ENCODE measurements at regions of chr10 and their contacts with region 1.

Region 1: GRCh38 chr10:28334296-28334695 is 31.4 kb upstream of the MPP7 start:
- DNase-seq: peak in 29 of 35 experiments; percentile 3 to 95 (median 52)
- ATAC-seq: peak; percentile 69 to 78 (median 74)
- H3K4me3 ChIP-seq: peak overlapping the region; percentile 55 to 62
- H3K4me3 Mint-ChIP-seq: peak overlapping the region; percentile 91 to 92 (median 92)
- H3K27ac ChIP-seq: peak overlapping the region; percentile 97
- H3K27ac Mint-ChIP-seq: peak overlapping the region; percentile 99 to 100
- H3K4me1 ChIP-seq: peaks cover 33 to 61% of the 10 kb centered on the region in 2 experiments
- H3K4me1 Mint-ChIP-seq: peaks cover 64 to 84% (median 67%) of the 10 kb centered on the region in 3 donors
- H3K27me3 ChIP-seq: no peaks in the 10 kb centered on the region
- H3K27me3 Mint-ChIP-seq: no peaks in the 10 kb centered on the region

Region 2: DNA sequence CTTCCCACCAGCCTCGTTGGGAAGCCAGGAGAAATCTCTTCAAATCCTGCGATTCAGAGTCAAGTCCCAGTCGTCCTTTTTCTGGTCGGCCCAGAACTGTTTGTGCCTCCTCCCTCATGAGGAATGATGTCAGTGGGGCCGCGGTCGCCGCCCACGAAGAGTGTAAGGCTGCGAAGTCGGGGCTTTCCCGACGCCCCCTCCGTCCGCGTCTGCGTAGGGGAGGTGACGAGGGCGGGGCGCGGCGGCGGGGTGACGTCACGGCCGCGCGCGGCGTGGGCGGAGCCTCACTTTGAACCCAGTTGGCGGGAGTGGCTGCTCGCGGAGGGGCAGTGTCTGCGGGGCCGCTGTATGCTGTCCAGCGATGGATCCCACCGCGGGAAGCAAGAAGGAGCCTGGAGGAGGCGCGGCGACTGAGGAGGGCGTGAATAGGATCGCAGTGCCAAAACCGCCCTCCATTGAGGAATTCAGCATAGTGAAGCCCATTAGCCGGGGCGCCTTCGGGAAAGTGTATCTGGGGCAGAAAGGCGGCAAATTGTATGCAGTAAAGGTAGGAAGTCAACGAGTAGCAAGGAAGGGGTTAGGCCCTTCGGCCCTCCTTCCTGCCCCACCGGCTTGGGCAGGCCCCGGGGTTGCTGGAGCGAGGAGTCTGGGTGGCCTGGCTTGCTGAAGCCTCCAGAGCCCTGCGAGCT is 1179.1 kb before region 1 on chr10 and contains the start of gene MASTL:
- CTCF ChIA-PET with region 1: no interaction called
- POLR2A ChIA-PET with region 1: interaction called in 1 of 2 experiments, 15 read pairs
- DNase-seq: peak; percentile 87 to 98 (median 94)
- ATAC-seq: peak; percentile 82 to 90 (median 84)
- H3K4me3 ChIP-seq: peak within 1 kb of the TSS; percentile 65 to 100
- H3K4me3 Mint-ChIP-seq: peak within 1 kb of the TSS; percentile 96 to 100 (median 99)
- H3K27ac ChIP-seq: peak within 1 kb of the TSS; percentile 95
- H3K27ac Mint-ChIP-seq: peak within 1 kb of the TSS; percentile 100
- H3K4me1 ChIP-seq: peaks cover 12 to 39% of the 10 kb centered on the region in 2 experiments
- H3K4me1 Mint-ChIP-seq: peaks cover 49 to 65% (median 52%) of the 10 kb centered on the region in 3 donors
- H3K27me3 ChIP-seq: no peaks in the 10 kb centered on the region
- H3K27me3 Mint-ChIP-seq: no peaks in the 10 kb centered on the region
- total RNA-seq, gene MASTL: 4.2 to 21.2 (median 10.4) TPM

Region 3: DNA sequence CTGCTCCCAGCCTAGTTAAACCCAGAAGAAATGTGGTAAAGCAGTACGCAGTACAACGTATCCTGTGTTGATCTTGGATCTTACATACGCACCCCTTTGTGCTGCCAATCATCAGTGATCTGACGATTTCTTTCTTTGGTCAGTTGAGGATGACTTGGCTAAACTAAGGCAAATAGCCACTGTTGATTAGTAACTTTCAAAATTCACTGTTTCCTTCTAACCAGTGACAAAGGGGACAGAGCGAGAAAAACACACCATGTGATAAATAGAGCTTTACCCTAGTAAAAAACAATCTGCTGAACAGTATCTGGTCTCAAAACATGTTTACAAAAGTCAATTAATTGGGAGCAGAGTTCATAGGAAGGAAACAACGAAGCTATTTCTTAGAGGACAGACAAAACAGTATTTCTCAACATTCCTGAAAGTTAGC is 953.4 kb before region 1 on chr10:
- CTCF ChIA-PET with region 1: no interaction called
- POLR2A ChIA-PET with region 1: interaction called in 1 of 2 experiments, 12 read pairs
- DNase-seq: no peak
- ATAC-seq: no peak
- H3K4me3 ChIP-seq: no peak overlapping the region
- H3K4me3 Mint-ChIP-seq: no peak overlapping the region
- H3K27ac ChIP-seq: no peak overlapping the region
- H3K27ac Mint-ChIP-seq: no peak overlapping the region
- H3K4me1 ChIP-seq: no peaks in the 10 kb centered on the region
- H3K4me1 Mint-ChIP-seq: no peaks in the 10 kb centered on the region
- H3K27me3 ChIP-seq: peaks cover 0 to 2% of the 10 kb centered on the region in 2 experiments
- H3K27me3 Mint-ChIP-seq: peaks cover 20 to 44% of the 10 kb centered on the region in 2 donors

Region 4: DNA sequence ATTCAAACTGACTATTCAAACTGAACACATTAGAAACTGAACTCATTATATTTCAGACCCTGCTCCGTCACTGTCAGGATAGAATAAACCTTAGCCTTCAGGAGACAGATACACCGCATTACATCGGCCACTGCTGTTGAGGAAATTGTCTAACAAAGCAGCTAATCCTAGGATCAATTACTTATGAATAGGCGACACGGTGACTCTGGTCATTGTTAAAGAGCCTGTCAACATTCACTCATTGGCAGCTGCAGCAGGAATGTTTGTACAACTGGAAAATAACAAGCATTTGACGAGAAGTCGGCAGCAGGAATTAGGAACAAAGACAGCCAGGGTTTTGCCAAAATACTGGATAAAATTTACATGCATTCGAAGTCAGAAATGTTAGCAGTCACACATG is 476.7 kb before region 1 on chr10:
- CTCF ChIA-PET with region 1: no interaction called
- POLR2A ChIA-PET with region 1: no interaction called
- DNase-seq: no peak
- ATAC-seq: no peak
- H3K4me3 ChIP-seq: no peak overlapping the region
- H3K4me3 Mint-ChIP-seq: no peak overlapping the region
- H3K27ac ChIP-seq: no peak overlapping the region
- H3K27ac Mint-ChIP-seq: no peak overlapping the region
- H3K4me1 ChIP-seq: no peaks in the 10 kb centered on the region
- H3K4me1 Mint-ChIP-seq: no peaks in the 10 kb centered on the region
- H3K27me3 ChIP-seq: no peaks in the 10 kb centered on the region
- H3K27me3 Mint-ChIP-seq: peaks cover 0 to 1% of the 10 kb centered on the region in 2 donors

Region 5: DNA sequence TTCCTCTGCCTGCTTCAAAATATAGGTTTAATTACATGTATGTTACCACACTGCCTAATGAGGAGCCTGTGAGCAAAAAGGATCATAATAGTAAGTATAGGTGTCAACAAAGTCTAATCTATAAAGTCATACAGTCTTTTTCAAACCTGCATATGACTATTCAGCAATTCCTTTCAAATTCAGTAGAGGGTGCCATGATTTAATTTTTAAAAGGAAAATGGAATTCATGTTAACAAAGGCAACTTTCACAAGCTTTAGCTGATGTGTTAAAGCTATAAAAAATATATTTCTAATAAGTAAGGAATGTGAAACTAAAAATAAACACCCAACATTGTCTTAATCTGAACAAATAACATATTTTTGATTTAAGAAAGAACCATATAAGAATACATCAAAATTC is 83.5 kb before region 1 on chr10:
- CTCF ChIA-PET with region 1: interaction called, 3 to 10 read pairs
- POLR2A ChIA-PET with region 1: no interaction called
- DNase-seq: peak in 1 of 35 experiments; percentile 50
- ATAC-seq: peak in 1 of 4 experiments; percentile 54
- H3K4me3 ChIP-seq: no peak overlapping the region
- H3K4me3 Mint-ChIP-seq: no peak overlapping the region
- H3K27ac ChIP-seq: no peak overlapping the region
- H3K27ac Mint-ChIP-seq: no peak overlapping the region
- H3K4me1 ChIP-seq: peaks cover 0 to 9% of the 10 kb centered on the region in 2 experiments
- H3K4me1 Mint-ChIP-seq: peaks cover 40 to 50% (median 43%) of the 10 kb centered on the region in 3 donors
- H3K27me3 ChIP-seq: no peaks in the 10 kb centered on the region
- H3K27me3 Mint-ChIP-seq: no peaks in the 10 kb centered on the region

Region 6: DNA sequence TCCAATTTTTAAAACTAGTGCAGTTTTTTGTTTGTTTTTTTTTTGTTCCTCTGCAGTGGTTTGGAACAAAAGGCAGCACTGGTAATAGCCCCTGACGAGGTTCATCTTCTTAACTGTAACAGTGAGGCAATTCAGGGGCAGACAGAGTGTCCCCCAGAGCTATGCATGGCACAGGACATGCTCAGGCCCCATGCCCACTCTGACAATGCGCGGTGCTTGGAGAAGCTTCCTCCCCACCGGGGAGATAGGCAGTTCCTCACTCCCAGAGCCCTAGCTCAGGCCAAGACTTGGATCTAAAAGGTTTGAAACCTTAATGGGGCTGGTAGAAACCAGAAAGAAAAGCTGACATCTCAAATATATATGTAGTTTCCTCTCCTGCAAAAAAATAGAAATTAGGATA is 13.5 kb before region 1 on chr10:
- CTCF ChIA-PET with region 1: interaction called, 4 to 5 read pairs
- POLR2A ChIA-PET with region 1: interaction called, 3 to 10 read pairs
- DNase-seq: no peak
- ATAC-seq: no peak
- H3K4me3 ChIP-seq: no peak overlapping the region
- H3K4me3 Mint-ChIP-seq: no peak overlapping the region
- H3K27ac ChIP-seq: no peak overlapping the region
- H3K27ac Mint-ChIP-seq: no peak overlapping the region
- H3K4me1 ChIP-seq: peaks cover 0 to 3% of the 10 kb centered on the region in 2 experiments
- H3K4me1 Mint-ChIP-seq: peaks cover 37 to 60% (median 43%) of the 10 kb centered on the region in 3 donors
- H3K27me3 ChIP-seq: no peaks in the 10 kb centered on the region
- H3K27me3 Mint-ChIP-seq: no peaks in the 10 kb centered on the region

Region 7: DNA sequence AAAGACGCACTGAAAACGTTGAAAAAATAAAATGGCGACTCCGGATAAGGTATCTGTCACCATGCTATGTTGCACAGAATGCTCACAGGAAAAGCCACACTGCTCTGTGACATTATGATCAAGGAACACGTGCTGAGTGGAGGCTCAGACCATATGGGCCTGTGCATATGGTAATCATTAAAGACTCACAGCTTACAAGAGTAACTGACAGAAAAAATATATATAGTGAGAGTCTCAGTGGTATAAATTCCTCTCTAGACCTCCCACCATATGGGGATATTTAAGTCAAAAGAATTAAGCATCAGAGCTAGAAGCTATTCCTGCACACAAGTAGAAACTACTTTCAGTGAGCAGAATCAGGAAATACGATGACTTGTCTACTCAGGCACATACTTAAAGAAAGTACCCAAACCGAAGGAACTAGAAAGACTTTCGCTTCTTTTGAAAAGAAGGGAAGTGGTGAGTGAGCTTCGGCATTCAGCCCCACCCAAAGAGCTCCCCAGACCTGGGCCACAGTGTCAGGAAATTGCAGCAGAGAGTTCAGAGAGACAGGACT is 33.7 kb after region 1 on chr10:
- CTCF ChIA-PET with region 1: interaction called, 5 to 23 read pairs
- POLR2A ChIA-PET with region 1: interaction called, 13 to 37 read pairs
- DNase-seq: peak; percentile 20 to 87 (median 54)
- ATAC-seq: peak; percentile 96 to 98 (median 98)
- H3K4me3 ChIP-seq: peak overlapping the region in 1 of 2 donors; percentile 32
- H3K4me3 Mint-ChIP-seq: peak overlapping the region; percentile 40 to 73 (median 54)
- H3K27ac ChIP-seq: peak overlapping the region; percentile 72
- H3K27ac Mint-ChIP-seq: peak overlapping the region; percentile 95 to 100
- H3K4me1 ChIP-seq: peaks cover 34 to 56% of the 10 kb centered on the region in 2 experiments
- H3K4me1 Mint-ChIP-seq: peaks cover 53 to 68% (median 62%) of the 10 kb centered on the region in 3 donors
- H3K27me3 ChIP-seq: no peaks in the 10 kb centered on the region
- H3K27me3 Mint-ChIP-seq: no peaks in the 10 kb centered on the region